ENCODE measurements at regions of chr22 and their contacts with region 1.

Region 1: GRCh38 chr22:46563381-46564083 is 26.1 kb upstream of the CELSR1 start:
- DNase-seq: peak; percentile 61 to 70
- H3K4me3 ChIP-seq: peak overlapping the region; percentile 14; the same call in 1 of the 2 replicates
- H3K27ac ChIP-seq: 0 out of 2 replicates have a peak overlapping the region, but pooled peaks have one; percentile 2
- H3K4me1 ChIP-seq: peaks cover 20% of the 10 kb centered on the region
- H3K27me3 ChIP-seq: no peaks in the 10 kb centered on the region
- CTCF ChIP-seq: peak; percentile 94

Region 2: GRCh38 chr22:46377566-46378425 is 185.7 kb before region 1 on chr22:
- CTCF ChIA-PET with region 1: interaction called, 13 read pairs
- POLR2A ChIA-PET with region 1: no interaction called
- intact Hi-C with region 1: no loop called
- DNase-seq: peak; percentile 94 to 96
- H3K4me3 ChIP-seq: peak overlapping the region; percentile 39; the same call in 1 of the 2 replicates
- H3K27ac ChIP-seq: peak overlapping the region; percentile 95
- H3K4me1 ChIP-seq: peaks cover 67% of the 10 kb centered on the region
- H3K27me3 ChIP-seq: no peaks in the 10 kb centered on the region
- CTCF ChIP-seq: no peak

Region 3: DNA sequence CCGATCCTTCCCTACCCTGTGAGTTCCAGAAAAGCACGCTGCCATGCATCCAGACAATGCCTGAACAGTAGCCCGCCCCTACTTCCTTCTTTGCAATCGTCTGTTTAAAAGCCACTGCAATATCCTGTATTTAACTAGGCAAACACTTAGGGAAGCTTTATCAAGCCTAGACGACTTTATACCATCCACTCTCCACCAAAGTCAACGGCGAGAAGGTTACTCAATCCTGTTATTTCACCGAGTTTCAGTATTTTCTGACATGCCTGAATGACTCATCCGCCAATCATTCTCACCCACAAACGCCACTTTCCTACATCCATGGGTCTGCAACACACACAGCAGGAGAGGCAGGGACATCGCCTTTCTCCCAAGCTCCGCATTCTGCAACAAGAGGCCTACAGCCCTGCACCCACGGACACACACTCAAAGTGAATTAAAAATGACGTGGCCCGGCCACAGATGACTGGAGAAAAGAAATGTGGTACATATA is 35.4 kb before region 1 on chr22:
- CTCF ChIA-PET with region 1: no interaction called
- POLR2A ChIA-PET with region 1: no interaction called
- intact Hi-C with region 1: no loop called
- DNase-seq: peak; percentile 79 to 99
- H3K4me3 ChIP-seq: peak overlapping the region; percentile 5; the same call in 1 of the 2 replicates
- H3K27ac ChIP-seq: peak overlapping the region; percentile 99
- H3K4me1 ChIP-seq: peaks cover 58% of the 10 kb centered on the region
- H3K27me3 ChIP-seq: no peaks in the 10 kb centered on the region
- CTCF ChIP-seq: no peak

Region 4: GRCh38 chr22:46619830-46620501 is 56.4 kb after region 1 on chr22 and contains the start of gene GRAMD4:
- CTCF ChIA-PET with region 1: no interaction called
- POLR2A ChIA-PET with region 1: interaction called, 10 read pairs
- intact Hi-C with region 1: no loop called
- DNase-seq: no peak
- H3K4me3 ChIP-seq: no peak within 1 kb of the TSS
- H3K27ac ChIP-seq: no peak within 1 kb of the TSS
- H3K4me1 ChIP-seq: no peaks in the 10 kb centered on the region
- H3K27me3 ChIP-seq: no peaks in the 10 kb centered on the region
- CTCF ChIP-seq: no peak
- total RNA-seq, gene GRAMD4: 36.4 and 38.2 TPM in 2 replicates

Region 5: GRCh38 chr22:46758867-46759290 is 195.3 kb after region 1 on chr22:
- CTCF ChIA-PET with region 1: interaction called, 9 read pairs
- POLR2A ChIA-PET with region 1: no interaction called
- intact Hi-C with region 1: loop called (anchors 5 kb)
- DNase-seq: peak; percentile 54 to 73
- H3K4me3 ChIP-seq: no peak overlapping the region
- H3K27ac ChIP-seq: no peak overlapping the region
- H3K4me1 ChIP-seq: peaks cover 27% of the 10 kb centered on the region
- H3K27me3 ChIP-seq: no peaks in the 10 kb centered on the region
- CTCF ChIP-seq: peak; percentile 86

Region 6: DNA sequence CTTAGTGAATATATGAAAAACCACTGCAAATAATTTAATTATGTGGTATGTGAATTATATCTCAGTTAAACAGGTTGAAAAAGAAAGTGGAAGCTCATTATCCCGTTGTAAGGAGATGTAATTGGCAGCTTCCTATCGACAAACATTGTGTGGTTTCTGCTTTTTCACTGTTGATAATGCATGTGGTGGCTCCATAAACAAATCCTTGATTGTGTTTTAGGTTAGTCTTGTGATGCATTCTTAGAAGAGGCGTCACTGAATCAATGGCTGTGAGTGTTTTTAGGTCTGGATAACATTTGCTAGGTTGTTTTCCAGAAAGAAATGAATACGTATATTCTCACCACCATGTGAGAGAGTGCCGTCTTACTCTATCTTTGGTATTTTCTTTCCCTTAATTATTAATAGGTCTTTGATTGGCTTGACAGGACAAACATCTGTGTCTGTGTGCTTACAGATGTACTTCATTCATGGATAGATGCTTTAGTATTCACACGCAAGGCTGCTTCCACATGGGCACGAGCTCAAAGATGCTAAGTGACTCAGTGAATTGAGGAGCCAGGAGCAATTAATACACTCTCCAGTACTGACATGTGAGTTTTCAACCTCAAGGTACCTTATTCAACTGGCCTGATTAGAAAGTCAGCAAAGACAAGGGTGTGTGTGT is 365.6 kb after region 1 on chr22:
- CTCF ChIA-PET with region 1: no interaction called
- POLR2A ChIA-PET with region 1: no interaction called
- intact Hi-C with region 1: no loop called
- DNase-seq: no peak
- H3K4me3 ChIP-seq: no peak overlapping the region
- H3K27ac ChIP-seq: no peak overlapping the region
- H3K4me1 ChIP-seq: peaks cover 3% of the 10 kb centered on the region
- H3K27me3 ChIP-seq: no peaks in the 10 kb centered on the region
- CTCF ChIP-seq: no peak

Region 7: DNA sequence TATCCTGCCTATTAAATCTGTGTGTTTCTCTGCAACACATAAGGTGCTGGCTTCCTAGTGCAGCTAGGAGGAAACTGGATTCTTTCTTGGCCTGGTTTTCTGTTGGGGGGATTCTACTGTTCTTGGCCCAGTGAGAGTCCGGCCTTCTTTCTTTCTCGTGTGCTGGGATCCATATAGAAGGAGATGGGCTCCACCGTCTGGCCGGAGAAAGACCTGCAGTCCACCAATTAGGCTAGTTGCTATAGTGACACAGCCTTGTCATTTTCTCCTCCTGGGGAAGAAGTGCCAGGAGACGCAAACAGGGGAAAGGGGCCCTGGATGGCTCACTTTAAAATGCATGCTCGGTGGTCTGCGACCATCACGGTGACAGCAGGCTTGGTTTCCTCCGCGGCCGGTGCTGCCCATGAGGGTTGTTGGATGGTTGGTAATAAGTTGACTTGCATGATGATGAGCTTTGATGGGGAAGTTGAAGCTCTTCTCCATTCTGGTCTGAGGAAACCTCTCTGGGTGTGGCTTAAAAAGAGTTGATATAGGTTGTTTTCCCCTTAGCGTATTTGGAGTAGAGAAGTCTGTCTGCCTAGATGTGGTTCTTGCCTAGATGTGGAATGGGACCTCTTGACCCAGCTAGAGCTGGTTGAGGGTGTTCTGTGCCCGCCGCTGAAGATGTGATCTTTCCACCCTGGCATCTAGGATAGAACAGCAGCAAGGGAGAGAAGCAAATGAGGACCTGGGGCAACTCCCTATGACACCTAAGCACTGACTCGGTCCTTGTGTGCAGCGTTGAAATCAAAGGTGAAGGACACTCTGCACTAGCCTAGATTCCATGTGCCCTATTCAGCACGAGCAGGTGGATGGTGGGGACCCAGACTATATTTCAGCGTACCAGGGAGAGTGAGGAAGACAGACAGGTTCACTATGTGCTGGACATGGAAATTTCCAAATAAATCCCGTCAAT is 1929.1 kb after region 1 on chr22:
- CTCF ChIA-PET with region 1: no interaction called
- POLR2A ChIA-PET with region 1: no interaction called
- intact Hi-C with region 1: loop called (anchors 5 kb)
- DNase-seq: peak; percentile 40 to 59
- H3K4me3 ChIP-seq: no peak overlapping the region
- H3K27ac ChIP-seq: no peak overlapping the region
- H3K4me1 ChIP-seq: no peaks in the 10 kb centered on the region
- H3K27me3 ChIP-seq: peaks cover 53% of the 10 kb centered on the region
- CTCF ChIP-seq: peak; percentile 91

Measured in PC-9 (cell line).